MCF 10A (cell line): ENCODE measurements at regions of chrX and their contacts with region 1.

Region 1: DNA sequence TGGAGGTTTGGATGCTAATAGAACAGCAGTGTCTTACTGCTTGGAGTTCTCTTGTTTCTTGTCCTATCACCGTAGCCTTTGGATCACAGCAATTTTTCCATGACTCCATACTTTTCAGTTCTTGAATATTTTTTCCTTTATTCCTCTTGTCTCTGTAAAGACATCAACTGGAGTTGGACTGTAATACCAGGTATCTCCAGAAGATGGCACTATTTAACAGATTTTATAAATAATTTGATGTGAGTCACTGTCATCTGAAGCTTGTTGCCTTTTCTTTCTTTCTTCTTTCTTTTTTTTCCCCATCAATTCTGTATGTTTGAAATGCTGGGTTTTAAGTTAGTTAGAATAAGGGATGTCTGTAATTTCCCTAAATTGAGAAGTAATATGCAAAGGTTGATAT is 24.1 kb downstream of the HPRT1 start:
- DNase-seq: peak; percentile 59
- H3K4me3 Mint-ChIP-seq: no peak overlapping the region
- H3K27ac Mint-ChIP-seq: no peak overlapping the region
- H3K4me1 Mint-ChIP-seq: no peaks in the 10 kb centered on the region
- H3K27me3 Mint-ChIP-seq: peaks cover 25% of the 10 kb centered on the region
- CTCF ChIP-seq: peak; percentile 63

Region 2: GRCh38 chrX:133985967-133986683 is 497.9 kb before region 1 on chrX:
- CTCF ChIA-PET with region 1: no interaction called
- POLR2A ChIA-PET with region 1: no interaction called
- intact Hi-C with region 1: no loop called
- DNase-seq: no peak
- H3K4me3 Mint-ChIP-seq: peak overlapping the region; percentile 68
- H3K27ac Mint-ChIP-seq: no peak overlapping the region
- H3K4me1 Mint-ChIP-seq: no peaks in the 10 kb centered on the region
- H3K27me3 Mint-ChIP-seq: peaks cover 36% of the 10 kb centered on the region
- CTCF ChIP-seq: no peak

Region 3: DNA sequence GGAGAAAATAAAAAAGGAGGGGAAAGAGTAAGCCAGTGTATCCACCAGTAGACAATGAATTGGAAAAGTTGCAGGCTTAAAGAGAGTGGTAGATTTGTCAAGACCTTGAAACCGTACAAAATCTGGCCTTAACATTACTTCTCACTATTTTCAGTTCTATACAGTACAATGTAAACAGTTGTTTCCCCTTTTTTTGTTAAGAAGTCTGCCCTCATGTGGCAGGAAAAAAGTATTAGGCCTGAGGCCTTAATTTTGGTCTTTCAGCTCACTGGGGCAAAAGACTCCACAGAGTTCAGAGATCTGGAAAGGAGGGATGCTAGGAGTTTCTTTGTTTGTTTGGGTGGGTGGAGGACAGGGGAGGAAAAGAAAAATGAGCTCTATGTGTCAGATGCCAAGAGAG is 339.8 kb before region 1 on chrX:
- CTCF ChIA-PET with region 1: no interaction called
- POLR2A ChIA-PET with region 1: no interaction called
- intact Hi-C with region 1: no loop called
- DNase-seq: peak; percentile 36
- H3K4me3 Mint-ChIP-seq: no peak overlapping the region
- H3K27ac Mint-ChIP-seq: no peak overlapping the region
- H3K4me1 Mint-ChIP-seq: no peaks in the 10 kb centered on the region
- H3K27me3 Mint-ChIP-seq: peaks cover 34% of the 10 kb centered on the region
- CTCF ChIP-seq: peak; percentile 38

Region 4: GRCh38 chrX:134753718-134754008 is 269.6 kb after region 1 on chrX:
- CTCF ChIA-PET with region 1: interaction called, 6 read pairs
- POLR2A ChIA-PET with region 1: no interaction called
- intact Hi-C with region 1: loop called (anchors 2 kb)
- DNase-seq: peak; percentile 31
- H3K4me3 Mint-ChIP-seq: no peak overlapping the region
- H3K27ac Mint-ChIP-seq: no peak overlapping the region
- H3K4me1 Mint-ChIP-seq: no peaks in the 10 kb centered on the region
- H3K27me3 Mint-ChIP-seq: peaks cover 42% of the 10 kb centered on the region
- CTCF ChIP-seq: peak; percentile 26

Region 5: GRCh38 chrX:134999469-134999868 is 515.4 kb after region 1 on chrX:
- CTCF ChIA-PET with region 1: interaction called, 6 read pairs
- POLR2A ChIA-PET with region 1: no interaction called
- intact Hi-C with region 1: loop called (anchors 2 kb)
- DNase-seq: peak; percentile 52
- H3K4me3 Mint-ChIP-seq: no peak overlapping the region
- H3K27ac Mint-ChIP-seq: no peak overlapping the region
- H3K4me1 Mint-ChIP-seq: peaks cover 5% of the 10 kb centered on the region
- H3K27me3 Mint-ChIP-seq: peaks cover 35% of the 10 kb centered on the region
- CTCF ChIP-seq: peak; percentile 47